Natural killer cell (primary cell): ENCODE measurements at regions of chr16 and their contacts with region 1.

Region 1: GRCh38 chr16:83068686-83069085 is 441.9 kb downstream of the CDH13 start:
- DNase-seq: no peak
- ATAC-seq: no peak
- H3K4me3 ChIP-seq: no peak overlapping the region
- H3K4me3 Mint-ChIP-seq: no peak overlapping the region
- H3K27ac ChIP-seq: no peak overlapping the region
- H3K27ac Mint-ChIP-seq: no peak overlapping the region
- H3K4me1 ChIP-seq: peaks cover 4% of the 10 kb centered on the region
- H3K4me1 Mint-ChIP-seq: peaks cover 13 to 21% of the 10 kb centered on the region in 2 donors
- H3K27me3 ChIP-seq: no peaks in the 10 kb centered on the region
- H3K27me3 Mint-ChIP-seq: peaks cover 7% of the 10 kb centered on the region in 2 donors
- CTCF ChIP-seq: no peak

Region 2: GRCh38 chr16:82755569-82756282 is 313.0 kb before region 1 on chr16:
- intact Hi-C with region 1: loop called (anchors 10 kb)
- DNase-seq: no peak
- ATAC-seq: no peak
- H3K4me3 ChIP-seq: no peak overlapping the region
- H3K4me3 Mint-ChIP-seq: no peak overlapping the region
- H3K27ac ChIP-seq: no peak overlapping the region
- H3K27ac Mint-ChIP-seq: no peak overlapping the region
- H3K4me1 ChIP-seq: no peaks in the 10 kb centered on the region
- H3K4me1 Mint-ChIP-seq: peaks cover 11 to 22% of the 10 kb centered on the region in 2 donors
- H3K27me3 ChIP-seq: no peaks in the 10 kb centered on the region
- H3K27me3 Mint-ChIP-seq: peaks cover 0 to 12% of the 10 kb centered on the region in 2 donors
- CTCF ChIP-seq: no peak

Region 3: DNA sequence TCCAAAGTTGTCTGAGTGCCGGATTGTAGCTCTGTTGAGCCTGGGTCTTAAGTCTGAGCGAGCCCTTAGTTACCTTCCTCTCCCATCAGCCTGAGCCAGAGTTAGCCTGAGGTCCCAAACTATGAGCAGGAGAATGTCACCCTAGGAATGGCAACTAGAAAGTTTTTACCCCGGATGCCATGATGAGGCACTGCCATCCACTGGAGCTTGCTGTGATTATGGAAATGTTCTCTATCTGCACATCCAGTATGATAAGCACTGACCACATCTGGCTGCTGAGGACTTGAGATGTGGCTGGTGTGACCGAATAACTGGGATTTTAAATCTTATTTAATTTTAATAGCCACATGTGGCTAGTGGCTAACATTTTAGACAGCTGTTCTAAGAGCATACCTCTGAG is 108.1 kb after region 1 on chr16:
- intact Hi-C with region 1: no loop called
- DNase-seq: no peak
- ATAC-seq: no peak
- H3K4me3 ChIP-seq: no peak overlapping the region
- H3K4me3 Mint-ChIP-seq: no peak overlapping the region
- H3K27ac ChIP-seq: no peak overlapping the region
- H3K27ac Mint-ChIP-seq: no peak overlapping the region
- H3K4me1 ChIP-seq: no peaks in the 10 kb centered on the region
- H3K4me1 Mint-ChIP-seq: no peaks in the 10 kb centered on the region
- H3K27me3 ChIP-seq: no peaks in the 10 kb centered on the region
- H3K27me3 Mint-ChIP-seq: peaks cover 17 to 18% of the 10 kb centered on the region in 2 donors
- CTCF ChIP-seq: no peak